GM10248 (cell line): ENCODE measurements at regions of chr6 and their contacts with region 1.

Region 1: GRCh38 chr6:26270903-26271667 is 93.9 kb upstream of the BTN3A2 start:
- DNase-seq: peak; percentile 91
- CTCF ChIP-seq: no peak

Region 2: GRCh38 chr6:26122793-26123674 is 148.1 kb before region 1 on chr6:
- CTCF ChIA-PET with region 1: interaction called, 7 read pairs
- POLR2A ChIA-PET with region 1: interaction called, 14 read pairs
- DNase-seq: peak; percentile 83
- CTCF ChIP-seq: no peak

Region 3: GRCh38 chr6:26249957-26250697 is 21.0 kb before region 1 on chr6:
- CTCF ChIA-PET with region 1: interaction called, 133 read pairs
- POLR2A ChIA-PET with region 1: interaction called, 10 read pairs
- DNase-seq: no peak
- CTCF ChIP-seq: peak; percentile 59

Region 4: DNA sequence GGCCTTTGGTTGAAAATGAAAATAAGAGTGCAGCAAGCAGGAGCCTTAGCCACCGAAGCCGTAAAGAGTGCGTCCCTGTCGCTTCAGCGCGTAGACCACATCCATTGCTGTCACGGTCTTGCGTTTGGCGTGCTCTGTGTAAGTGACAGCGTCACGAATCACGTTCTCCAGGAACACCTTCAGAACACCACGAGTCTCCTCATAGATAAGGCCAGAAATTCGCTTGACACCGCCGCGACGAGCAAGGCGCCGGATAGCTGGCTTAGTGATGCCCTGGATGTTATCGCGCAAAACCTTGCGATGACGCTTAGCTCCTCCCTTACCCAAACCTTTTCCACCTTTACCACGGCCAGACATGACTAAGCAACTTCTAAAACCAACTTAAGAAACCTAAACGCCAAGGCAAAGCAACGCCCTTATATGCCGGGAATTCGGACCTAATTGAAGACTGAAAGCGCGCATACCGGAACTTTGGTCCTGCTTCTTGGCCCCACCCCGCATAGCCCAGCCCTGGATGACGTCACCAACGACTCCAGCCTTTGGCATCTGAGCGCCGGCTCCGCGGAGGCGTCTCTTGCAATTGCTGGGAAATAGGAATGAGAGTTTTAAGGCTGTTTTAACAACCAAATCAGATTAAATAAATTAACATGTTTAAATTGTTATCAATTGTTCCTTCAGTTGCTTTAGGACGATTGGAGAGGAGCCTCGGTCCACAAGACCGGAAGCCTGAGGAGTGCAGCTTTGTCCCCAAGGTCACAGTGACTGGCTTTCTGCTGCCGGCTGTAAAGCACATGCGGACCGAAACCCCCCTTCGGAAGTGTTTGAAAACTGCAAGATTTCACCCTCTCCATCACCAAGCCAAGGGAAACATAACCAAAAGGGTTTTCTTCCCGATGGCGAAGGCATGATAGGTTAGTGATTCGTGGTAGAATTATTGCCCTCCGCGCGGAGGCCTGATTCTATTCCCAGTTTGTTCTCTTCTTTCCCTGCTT is 14.4 kb after region 1 on chr6:
- CTCF ChIA-PET with region 1: interaction called, 18 read pairs
- POLR2A ChIA-PET with region 1: interaction called, 67 read pairs
- DNase-seq: peak; percentile 79
- CTCF ChIP-seq: no peak

Region 5: DNA sequence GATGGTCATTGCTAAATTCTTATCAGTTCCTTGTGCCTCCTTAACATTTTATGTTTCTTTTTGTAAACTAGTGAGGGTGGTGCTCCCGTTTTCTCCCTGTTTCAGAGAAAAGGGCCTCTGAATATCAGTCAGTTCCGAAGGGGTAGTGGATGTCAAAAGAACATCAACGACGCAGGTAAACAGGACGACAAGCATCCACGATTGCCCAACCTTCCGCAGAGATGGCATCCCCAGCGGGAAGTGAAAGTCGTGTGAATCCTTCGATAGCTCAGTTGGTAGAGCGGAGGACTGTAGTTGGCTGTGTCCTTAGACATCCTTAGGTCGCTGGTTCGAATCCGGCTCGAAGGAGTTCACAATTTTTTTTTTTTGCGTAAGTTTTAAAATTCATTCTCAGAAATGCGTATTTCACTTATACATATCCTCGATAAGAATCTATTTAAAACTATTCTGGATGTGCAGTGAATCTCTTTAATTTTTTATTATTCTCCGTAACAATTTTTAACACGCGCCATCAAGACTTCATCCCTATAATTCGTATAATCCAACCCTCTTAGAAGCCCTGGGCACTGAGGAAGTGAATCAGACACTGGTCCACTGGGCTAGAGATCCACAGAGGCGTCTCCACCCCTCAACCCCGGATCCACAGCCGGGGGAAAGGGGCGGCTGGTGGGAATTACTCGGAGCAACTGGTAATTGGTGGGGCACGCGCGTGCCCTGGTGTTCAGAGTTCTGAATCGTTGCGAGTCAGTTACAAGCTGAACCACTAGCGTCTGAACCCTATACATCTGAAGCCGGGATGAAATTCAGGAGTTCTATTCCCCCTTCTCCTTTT is 297.7 kb after region 1 on chr6:
- CTCF ChIA-PET with region 1: no interaction called
- POLR2A ChIA-PET with region 1: no interaction called
- DNase-seq: peak; percentile 82
- CTCF ChIP-seq: peak; percentile 38